ENCODE measurements at regions of chr13 and their contacts with region 1.

Region 1: DNA sequence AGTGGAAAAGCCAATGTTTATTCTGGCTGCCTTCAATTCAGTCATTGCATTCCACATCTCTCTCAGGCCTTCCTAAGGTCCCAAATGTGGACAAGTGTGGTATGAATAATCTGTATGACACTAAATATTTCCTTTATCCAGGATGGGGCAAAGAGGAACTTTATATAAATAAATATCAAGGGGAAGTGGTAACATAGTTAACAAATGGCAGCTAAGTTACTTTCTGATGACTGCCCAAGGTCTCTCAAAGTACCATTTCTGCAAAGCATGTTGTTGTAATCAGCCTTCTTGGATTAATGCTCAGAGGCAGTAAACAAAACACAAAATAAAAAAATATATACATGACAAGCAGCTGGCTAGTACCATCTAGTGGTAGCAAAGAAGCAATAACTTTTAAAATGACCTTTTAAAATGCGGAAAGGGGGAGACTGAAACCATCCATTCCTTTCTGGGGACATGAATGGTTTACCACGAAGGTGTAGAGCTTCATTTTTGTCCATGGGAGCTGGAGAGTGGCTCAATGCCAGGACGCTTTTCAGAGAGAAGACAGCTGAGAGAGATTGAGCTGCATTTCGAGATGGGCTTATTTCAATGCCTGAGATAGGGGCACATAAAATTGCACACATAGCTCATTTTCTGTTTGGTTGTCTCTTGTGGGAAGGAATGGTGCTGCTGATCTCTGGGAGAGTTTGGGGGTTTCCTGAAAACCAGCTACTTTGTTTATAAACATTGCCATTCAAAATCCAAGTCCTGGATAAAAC is 259.2 kb downstream of the RFC3 start:
- DNase-seq: peak; percentile 48
- ATAC-seq: peak; percentile 77
- H3K4me3 ChIP-seq: no peak overlapping the region
- H3K27ac ChIP-seq: peak overlapping the region; percentile 77
- H3K4me1 ChIP-seq: peaks cover 18% of the 10 kb centered on the region
- H3K27me3 ChIP-seq: no peaks in the 10 kb centered on the region
- CTCF ChIP-seq: peak; percentile 81

Region 2: GRCh38 chr13:33874873-33875272 is 202.2 kb before region 1 on chr13:
- CTCF ChIA-PET with region 1: no interaction called
- POLR2A ChIA-PET with region 1: no interaction called
- intact Hi-C with region 1: loop called (anchors 5 kb)
- DNase-seq: peak; percentile 4
- ATAC-seq: no peak
- H3K4me3 ChIP-seq: no peak overlapping the region
- H3K27ac ChIP-seq: no peak overlapping the region
- H3K4me1 ChIP-seq: no peaks in the 10 kb centered on the region
- H3K27me3 ChIP-seq: no peaks in the 10 kb centered on the region
- CTCF ChIP-seq: peak; percentile 45; the same call in 1 of the 2 replicates

Region 3: GRCh38 chr13:33968520-33969507 is 108.3 kb before region 1 on chr13:
- CTCF ChIA-PET with region 1: interaction called, 11 read pairs
- POLR2A ChIA-PET with region 1: no interaction called
- intact Hi-C with region 1: no loop called
- DNase-seq: no peak
- ATAC-seq: no peak
- H3K4me3 ChIP-seq: no peak overlapping the region
- H3K27ac ChIP-seq: no peak overlapping the region
- H3K4me1 ChIP-seq: no peaks in the 10 kb centered on the region
- H3K27me3 ChIP-seq: no peaks in the 10 kb centered on the region
- CTCF ChIP-seq: no peak

Region 4: DNA sequence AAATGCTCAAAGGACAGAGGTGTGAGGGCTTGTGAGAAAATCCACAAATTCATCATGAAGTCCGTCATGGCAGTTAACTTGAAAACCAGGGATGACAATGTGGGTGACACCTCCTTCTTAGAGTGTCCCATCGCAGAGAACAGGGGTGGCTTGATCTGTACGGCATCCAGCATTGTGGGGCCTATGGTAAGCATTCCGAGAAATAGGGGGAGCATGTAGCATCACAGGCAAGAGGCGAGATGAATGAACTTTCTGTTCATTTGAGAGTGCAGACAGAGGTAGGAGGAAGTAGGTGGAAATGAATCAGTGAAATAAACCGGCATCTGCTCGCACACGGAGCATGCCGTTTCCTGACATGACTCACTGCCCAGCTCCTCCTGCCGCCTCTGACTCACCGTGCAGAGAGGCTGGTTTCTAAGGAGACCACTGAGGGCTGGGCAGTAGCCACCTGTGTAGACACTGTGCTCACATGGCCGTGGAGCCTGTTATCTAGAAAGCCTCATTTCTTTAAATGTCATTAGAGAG is 79.8 kb after region 1 on chr13:
- CTCF ChIA-PET with region 1: no interaction called
- POLR2A ChIA-PET with region 1: no interaction called
- intact Hi-C with region 1: loop called (anchors 5 kb)
- DNase-seq: peak; percentile 96
- ATAC-seq: peak; percentile 90
- H3K4me3 ChIP-seq: peak overlapping the region; percentile 51
- H3K27ac ChIP-seq: peak overlapping the region; percentile 99
- H3K4me1 ChIP-seq: peaks cover 54% of the 10 kb centered on the region
- H3K27me3 ChIP-seq: no peaks in the 10 kb centered on the region
- CTCF ChIP-seq: no peak

Region 5: DNA sequence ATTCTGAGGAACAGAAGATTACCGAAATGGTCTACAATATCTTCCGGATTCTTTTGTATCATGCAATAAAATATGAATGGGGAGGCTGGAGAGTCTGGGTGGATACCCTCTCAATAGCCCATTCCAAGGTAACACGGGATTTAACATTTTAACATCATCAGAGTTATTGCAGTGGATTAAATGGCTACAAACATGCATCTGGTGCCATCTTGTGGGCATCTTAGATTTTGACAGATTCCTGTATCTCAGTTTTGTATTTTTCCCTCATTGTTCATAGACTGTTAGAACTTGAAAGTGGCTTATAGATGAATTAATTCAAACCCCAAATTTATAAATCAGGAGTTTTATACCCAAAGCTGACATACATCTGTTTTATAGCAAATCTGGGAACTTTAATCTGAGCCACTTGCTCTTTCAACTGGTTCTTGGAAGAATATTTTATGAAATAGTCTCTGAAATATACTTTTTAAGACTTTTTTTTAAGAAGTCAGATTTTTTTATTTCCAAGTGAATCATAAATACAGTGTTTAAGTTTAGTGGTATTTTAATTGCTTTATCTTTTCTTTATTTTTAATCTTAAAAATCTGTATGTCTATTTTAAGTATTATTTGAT is 1080.1 kb after region 1 on chr13:
- CTCF ChIA-PET with region 1: no interaction called
- POLR2A ChIA-PET with region 1: no interaction called
- intact Hi-C with region 1: loop called (anchors 5 kb)
- DNase-seq: peak; percentile 73
- ATAC-seq: peak; percentile 43; the same call in 1 of the 2 replicates
- H3K4me3 ChIP-seq: no peak overlapping the region
- H3K27ac ChIP-seq: no peak overlapping the region
- H3K4me1 ChIP-seq: no peaks in the 10 kb centered on the region
- H3K27me3 ChIP-seq: no peaks in the 10 kb centered on the region
- CTCF ChIP-seq: peak; percentile 79